Mammary epithelial cell (primary cell): ENCODE measurements at regions of chr1 and their contacts with region 1.

Region 1: GRCh38 chr1:221994274-221994698 is 252.4 kb upstream of the DUSP10 start:
- DNase-seq: peak; percentile 90
- H3K4me3 ChIP-seq: no peak overlapping the region
- H3K27ac ChIP-seq: peak overlapping the region; percentile 96
- H3K4me1 ChIP-seq: peaks cover 67% of the 10 kb centered on the region
- H3K27me3 ChIP-seq: no peaks in the 10 kb centered on the region
- CTCF ChIP-seq: no peak

Region 2: DNA sequence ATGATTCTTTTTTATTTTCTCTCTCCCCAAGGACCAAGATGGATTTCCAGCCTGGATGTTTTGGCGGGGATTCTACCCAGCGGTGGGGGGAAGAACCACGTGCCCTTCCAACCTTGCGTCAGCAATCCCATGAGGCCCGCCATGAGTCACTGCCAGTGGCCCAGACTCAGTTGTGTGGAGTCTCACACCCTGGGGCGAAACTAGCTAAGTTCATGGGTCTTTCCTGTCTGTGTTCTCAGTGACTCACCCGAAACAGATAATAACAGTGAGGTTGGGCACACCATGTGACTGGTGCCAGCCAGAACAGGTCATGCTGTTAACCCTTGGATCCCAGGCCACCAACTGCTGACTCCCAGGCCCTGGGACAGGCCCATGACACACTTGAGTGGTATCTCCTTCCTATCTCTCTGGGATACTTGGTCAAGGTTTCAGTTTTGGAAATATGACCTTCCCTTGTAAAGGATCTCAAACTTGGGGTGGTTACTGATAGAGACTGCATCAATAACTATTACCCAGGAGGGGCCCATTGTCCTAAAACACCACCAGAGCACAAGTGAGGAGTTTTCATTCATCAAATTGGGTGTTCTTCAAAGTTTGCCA is 154.4 kb before region 1 on chr1:
- CTCF ChIA-PET with region 1: no interaction called
- dilution Hi-C with region 1: no loop called
- in situ Hi-C with region 1: loop called in 1 of 2 experiments (anchors 5 kb)
- intact Hi-C with region 1: no loop called
- DNase-seq: peak; percentile 100
- H3K4me3 ChIP-seq: no peak overlapping the region
- H3K27ac ChIP-seq: peak overlapping the region; percentile 97
- H3K4me1 ChIP-seq: peaks cover 31% of the 10 kb centered on the region
- H3K27me3 ChIP-seq: no peaks in the 10 kb centered on the region
- CTCF ChIP-seq: no peak

Region 3: GRCh38 chr1:221945669-221946068 is 48.6 kb before region 1 on chr1:
- CTCF ChIA-PET with region 1: no interaction called
- dilution Hi-C with region 1: loop called (anchors 5 kb)
- in situ Hi-C with region 1: no loop called
- intact Hi-C with region 1: no loop called
- DNase-seq: no peak
- H3K4me3 ChIP-seq: no peak overlapping the region
- H3K27ac ChIP-seq: no peak overlapping the region
- H3K4me1 ChIP-seq: peaks cover 20% of the 10 kb centered on the region
- H3K27me3 ChIP-seq: no peaks in the 10 kb centered on the region
- CTCF ChIP-seq: no peak